Activated T-helper 1 cell treated with anti-CD3 and anti-CD28 coated beads, Interleukin-12 subunit alpha, Interleukin-12 subunit beta, Interleukin-2, Interleukin-4 antibody, amounts not matched to agents 30 ng/mL and 10 ng/mL and 1 ng/mL, durations not matched to agents 14 hours and 24 hours and 36 hours (primary cell): ENCODE measurements at regions of chr12 and their contacts with region 1.

Region 1: DNA sequence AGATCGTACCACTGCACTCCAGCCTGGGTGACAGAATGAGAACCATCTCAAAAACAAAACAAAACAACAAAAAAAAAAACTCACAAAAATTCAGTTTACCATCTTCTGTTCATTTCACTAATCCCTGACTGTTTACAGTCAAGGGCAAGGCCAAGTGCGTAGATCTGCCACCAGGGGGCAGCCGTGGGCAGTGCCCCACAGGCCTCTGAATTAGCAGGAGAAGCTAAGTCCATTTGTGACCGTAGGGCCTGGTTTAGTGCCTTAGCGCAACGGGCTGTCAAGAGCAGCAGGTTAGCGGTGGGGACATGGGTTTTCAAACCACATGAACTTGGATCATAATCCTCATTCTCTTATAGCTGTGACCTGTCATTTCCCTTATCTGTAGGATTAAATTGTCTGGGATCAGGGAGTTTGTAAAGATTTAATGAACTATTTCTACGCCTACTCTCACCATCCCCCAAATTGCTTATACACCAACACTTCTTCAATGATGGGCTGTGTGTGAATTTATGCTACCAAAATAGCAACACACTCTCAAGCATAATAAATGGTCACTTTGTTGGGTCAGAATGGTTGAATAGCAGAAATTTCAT is 49.0 kb downstream of the KCTD10 start:
- DNase-seq: peak; percentile 57
- H3K4me3 Mint-ChIP-seq: no peak overlapping the region
- H3K27ac Mint-ChIP-seq: no peak overlapping the region
- H3K4me1 Mint-ChIP-seq: peaks cover 8% of the 10 kb centered on the region
- H3K27me3 Mint-ChIP-seq: peaks cover 2% of the 10 kb centered on the region

Region 2: DNA sequence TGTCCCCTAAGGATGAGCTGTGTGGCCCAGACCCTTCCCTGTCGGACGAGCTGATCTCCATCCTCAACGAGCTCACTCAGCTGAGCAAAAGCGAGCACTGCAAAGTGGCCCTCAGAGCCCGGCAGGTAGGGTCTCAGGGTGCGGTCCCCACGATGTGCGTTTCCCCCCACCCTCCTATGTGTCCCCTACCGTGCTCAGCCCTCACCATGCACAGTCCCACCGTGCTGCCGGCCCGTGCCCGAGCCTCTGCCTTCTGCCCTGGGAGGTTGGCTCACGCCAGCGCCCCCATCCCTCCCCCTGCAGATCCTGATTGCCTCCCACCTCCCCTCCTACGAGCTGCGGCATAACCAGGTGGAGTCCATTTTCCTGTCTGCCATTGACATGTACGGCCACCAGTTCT is 205.6 kb before region 1 on chr12:
- intact Hi-C with region 1: no loop called
- DNase-seq: no peak
- H3K4me3 Mint-ChIP-seq: no peak overlapping the region
- H3K27ac Mint-ChIP-seq: no peak overlapping the region
- H3K4me1 Mint-ChIP-seq: no peaks in the 10 kb centered on the region
- H3K27me3 Mint-ChIP-seq: no peaks in the 10 kb centered on the region

Region 3: DNA sequence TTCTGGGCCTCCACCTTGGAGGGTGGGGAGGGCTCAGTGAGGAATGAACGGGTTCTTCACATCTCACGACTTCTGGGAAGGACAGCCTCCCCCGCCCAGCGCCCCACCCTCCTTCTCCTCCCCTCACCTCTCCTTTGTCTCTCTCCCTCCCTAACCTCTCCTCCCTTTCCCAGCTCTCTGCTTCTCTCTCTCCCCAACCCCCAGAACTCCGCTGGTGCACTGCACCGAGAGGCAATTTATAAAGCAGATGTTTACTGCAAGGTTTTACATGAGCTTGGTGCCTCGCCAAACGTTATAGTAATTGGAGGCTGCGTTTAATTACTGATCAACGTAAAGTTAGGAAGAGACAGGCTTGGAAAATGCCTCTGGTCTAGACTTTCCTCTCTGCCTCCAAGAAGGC is 242.6 kb after region 1 on chr12:
- intact Hi-C with region 1: no loop called
- DNase-seq: no peak
- H3K4me3 Mint-ChIP-seq: no peak overlapping the region
- H3K27ac Mint-ChIP-seq: no peak overlapping the region
- H3K4me1 Mint-ChIP-seq: no peaks in the 10 kb centered on the region
- H3K27me3 Mint-ChIP-seq: peaks cover 3% of the 10 kb centered on the region

Region 4: GRCh38 chr12:109775172-109775881 is 347.2 kb after region 1 on chr12:
- intact Hi-C with region 1: loop called (anchors 1 kb)
- DNase-seq: peak; percentile 46
- H3K4me3 Mint-ChIP-seq: no peak overlapping the region
- H3K27ac Mint-ChIP-seq: no peak overlapping the region
- H3K4me1 Mint-ChIP-seq: peaks cover 5% of the 10 kb centered on the region
- H3K27me3 Mint-ChIP-seq: peaks cover 8% of the 10 kb centered on the region

Region 5: GRCh38 chr12:109844983-109845823 is 417.1 kb after region 1 on chr12:
- intact Hi-C with region 1: loop called (anchors 10 kb)
- DNase-seq: peak; percentile 85
- H3K4me3 Mint-ChIP-seq: peak overlapping the region; percentile 37
- H3K27ac Mint-ChIP-seq: no peak overlapping the region
- H3K4me1 Mint-ChIP-seq: peaks cover 5% of the 10 kb centered on the region
- H3K27me3 Mint-ChIP-seq: no peaks in the 10 kb centered on the region